PC-9 (cell line): ENCODE measurements at regions of chr3 and their contacts with region 1.

Region 1: DNA sequence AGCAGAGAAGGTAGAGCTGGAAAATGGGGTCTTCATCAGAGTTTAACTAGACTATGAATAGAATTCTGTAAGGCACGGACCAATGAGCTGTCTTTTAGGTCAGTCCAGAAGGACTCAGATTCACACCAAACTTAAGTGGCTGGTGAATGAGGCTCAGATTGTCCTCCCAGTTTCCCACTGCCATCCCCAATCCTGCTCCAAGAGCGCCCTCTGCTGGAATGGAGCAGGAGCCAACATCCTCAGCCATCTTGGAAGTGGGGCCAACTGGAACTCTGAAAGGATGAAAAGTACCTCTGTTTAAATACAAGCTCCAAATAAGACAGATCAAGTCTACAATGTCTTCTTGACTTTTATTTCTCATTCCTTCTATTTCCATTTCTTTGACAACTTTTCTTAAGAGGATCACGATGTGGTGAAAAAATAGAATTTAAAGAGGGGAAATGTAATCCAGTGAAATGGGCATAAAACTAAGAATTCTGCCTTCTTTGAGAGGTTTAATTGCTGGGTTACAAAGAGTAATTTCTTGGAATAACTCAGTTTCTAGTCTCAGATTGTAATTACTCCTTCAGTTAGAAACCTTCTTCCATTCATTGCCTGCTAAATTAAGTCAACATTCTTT is 217.1 kb upstream of the TPRG1 start:
- DNase-seq: peak; percentile 67 to 85
- H3K4me3 ChIP-seq: no peak overlapping the region
- H3K27ac ChIP-seq: no peak overlapping the region
- H3K4me1 ChIP-seq: peaks cover 21% of the 10 kb centered on the region
- H3K27me3 ChIP-seq: no peaks in the 10 kb centered on the region
- CTCF ChIP-seq: peak; percentile 98

Region 2: GRCh38 chr3:187679638-187680396 is 1274.9 kb before region 1 on chr3:
- CTCF ChIA-PET with region 1: interaction called, 3 read pairs
- POLR2A ChIA-PET with region 1: no interaction called
- intact Hi-C with region 1: loop called (anchors 1 kb)
- DNase-seq: peak; percentile 71 to 79
- H3K4me3 ChIP-seq: no peak overlapping the region
- H3K27ac ChIP-seq: no peak overlapping the region
- H3K4me1 ChIP-seq: no peaks in the 10 kb centered on the region
- H3K27me3 ChIP-seq: peaks cover 47% of the 10 kb centered on the region
- CTCF ChIP-seq: peak; percentile 96

Region 3: DNA sequence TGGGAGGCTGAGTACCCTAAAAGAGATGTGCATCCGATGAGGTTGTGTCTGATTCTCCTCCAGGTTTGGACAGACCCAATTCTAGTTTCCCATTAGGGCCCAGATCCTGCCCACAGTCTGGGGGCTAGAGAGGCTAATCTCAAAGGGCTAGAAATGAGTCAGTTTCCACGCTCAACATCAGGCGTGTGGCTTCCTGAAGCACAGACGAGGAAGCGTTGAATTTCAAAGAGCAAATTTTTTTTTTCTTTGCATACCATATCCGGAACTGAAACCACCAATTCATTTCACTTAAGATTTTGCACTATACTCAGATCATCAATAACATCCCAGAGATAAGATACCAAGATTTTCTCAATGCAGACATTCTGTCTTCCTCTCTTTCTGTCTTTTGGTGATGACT is 1035.7 kb before region 1 on chr3:
- CTCF ChIA-PET with region 1: no interaction called
- POLR2A ChIA-PET with region 1: interaction called, 16 read pairs
- intact Hi-C with region 1: loop called (anchors 10 kb)
- DNase-seq: no peak
- H3K4me3 ChIP-seq: no peak overlapping the region
- H3K27ac ChIP-seq: no peak overlapping the region
- H3K4me1 ChIP-seq: peaks cover 94% of the 10 kb centered on the region
- H3K27me3 ChIP-seq: no peaks in the 10 kb centered on the region
- CTCF ChIP-seq: no peak

Region 4: GRCh38 chr3:188061133-188061532 is 893.6 kb before region 1 on chr3:
- CTCF ChIA-PET with region 1: no interaction called
- POLR2A ChIA-PET with region 1: interaction called, 4 read pairs
- intact Hi-C with region 1: loop called (anchors 1 kb)
- DNase-seq: peak; percentile 92 to 99
- H3K4me3 ChIP-seq: no peak overlapping the region
- H3K27ac ChIP-seq: peak overlapping the region; percentile 46
- H3K4me1 ChIP-seq: peaks cover 36% of the 10 kb centered on the region
- H3K27me3 ChIP-seq: no peaks in the 10 kb centered on the region
- CTCF ChIP-seq: no peak

Region 5: DNA sequence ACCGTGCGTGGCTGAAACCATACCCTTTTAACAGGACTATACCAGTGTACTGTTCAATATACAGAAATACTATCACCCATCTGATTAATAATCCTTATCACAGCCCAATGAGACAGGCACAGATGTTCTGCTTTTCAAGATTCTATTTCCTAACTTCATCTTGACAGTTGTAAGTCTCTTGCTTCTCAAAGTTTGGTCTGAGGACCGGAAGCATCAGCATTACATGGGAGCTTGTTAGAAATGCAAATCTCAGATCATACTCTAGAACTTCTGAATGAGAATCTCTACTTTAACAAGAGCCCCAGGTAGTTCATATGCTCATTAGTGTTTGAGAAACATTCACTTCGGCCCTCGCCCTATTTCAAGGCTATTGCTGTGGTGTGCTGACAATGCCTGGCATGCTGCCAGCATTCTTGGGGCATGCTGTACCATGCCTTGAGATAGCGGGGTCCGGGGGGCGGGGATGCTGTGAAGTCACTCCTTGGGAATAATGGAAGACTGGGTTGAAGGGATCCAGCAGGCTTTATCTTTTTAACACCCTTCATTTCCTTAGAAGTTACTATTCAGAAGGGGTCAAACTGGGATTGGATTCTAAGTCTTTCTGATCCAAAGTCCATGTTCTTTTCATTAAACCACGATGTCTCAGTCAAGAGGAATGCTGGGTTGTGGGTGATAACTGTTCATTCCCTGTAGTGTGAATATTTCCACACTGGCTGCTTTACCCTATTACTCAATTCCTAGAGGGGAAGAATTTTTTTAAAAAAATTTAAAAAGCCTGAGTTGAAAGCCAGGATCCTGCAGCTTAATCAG is 606.1 kb before region 1 on chr3:
- CTCF ChIA-PET with region 1: interaction called, 4 read pairs
- POLR2A ChIA-PET with region 1: no interaction called
- intact Hi-C with region 1: loop called (anchors 5 kb)
- DNase-seq: peak; percentile 69 to 85
- H3K4me3 ChIP-seq: no peak overlapping the region
- H3K27ac ChIP-seq: peak overlapping the region; percentile 37
- H3K4me1 ChIP-seq: peaks cover 17% of the 10 kb centered on the region
- H3K27me3 ChIP-seq: no peaks in the 10 kb centered on the region
- CTCF ChIP-seq: no peak

Region 6: GRCh38 chr3:189233225-189233858 is 278.6 kb after region 1 on chr3:
- CTCF ChIA-PET with region 1: interaction called, 7 read pairs
- POLR2A ChIA-PET with region 1: interaction called, 3 read pairs
- intact Hi-C with region 1: loop called (anchors 1 kb)
- DNase-seq: peak; percentile 54 to 74
- H3K4me3 ChIP-seq: no peak overlapping the region
- H3K27ac ChIP-seq: no peak overlapping the region
- H3K4me1 ChIP-seq: 0 out of 2 replicates have a peak, but pooled peaks cover 7% of the 10 kb centered on the region
- H3K27me3 ChIP-seq: no peaks in the 10 kb centered on the region
- CTCF ChIP-seq: peak; percentile 89